GM12878 (cell line): ENCODE measurements at regions of chrX and their contacts with region 1.

Region 1: GRCh38 chrX:49291615-49292337 is 11.7 kb upstream of the GAGE10 start:
- DNase-seq: no peak
- ATAC-seq: peak; percentile 94
- H3K4me3 ChIP-seq: no peak overlapping the region
- H3K27ac ChIP-seq: no peak overlapping the region
- H3K4me1 ChIP-seq: no peaks in the 10 kb centered on the region
- H3K27me3 ChIP-seq: no peaks in the 10 kb centered on the region
- CTCF ChIP-seq: peak; percentile 51 to 75 (median 70)
- EP300 ChIP-seq: no peak
- POLR2A ChIP-seq: no peak
- RAD21 ChIP-seq: peak; percentile 53

Region 2: GRCh38 chrX:49269010-49269767 is 22.6 kb before region 1 on chrX:
- CTCF ChIA-PET with region 1: no interaction called
- POLR2A ChIA-PET with region 1: no interaction called
- RAD21 ChIA-PET with region 1: no interaction called
- SMC1A ChIA-PET with region 1: no interaction called
- in situ Hi-C with region 1: no loop called
- intact Hi-C with region 1: no loop called
- DNase-seq: peak; percentile 93
- ATAC-seq: peak; percentile 94
- H3K4me3 ChIP-seq: peak overlapping the region; percentile 73; the same call in 1 of the 2 replicates
- H3K27ac ChIP-seq: peak overlapping the region; percentile 91
- H3K4me1 ChIP-seq: peaks cover 4% of the 10 kb centered on the region; the same call in 1 of the 2 replicates
- H3K27me3 ChIP-seq: no peaks in the 10 kb centered on the region
- CTCF ChIP-seq: no peak
- EP300 ChIP-seq: no peak; a peak in 1 of 4 replicates
- POLR2A ChIP-seq: peak; percentile 87
- RAD21 ChIP-seq: no peak

Region 3: DNA sequence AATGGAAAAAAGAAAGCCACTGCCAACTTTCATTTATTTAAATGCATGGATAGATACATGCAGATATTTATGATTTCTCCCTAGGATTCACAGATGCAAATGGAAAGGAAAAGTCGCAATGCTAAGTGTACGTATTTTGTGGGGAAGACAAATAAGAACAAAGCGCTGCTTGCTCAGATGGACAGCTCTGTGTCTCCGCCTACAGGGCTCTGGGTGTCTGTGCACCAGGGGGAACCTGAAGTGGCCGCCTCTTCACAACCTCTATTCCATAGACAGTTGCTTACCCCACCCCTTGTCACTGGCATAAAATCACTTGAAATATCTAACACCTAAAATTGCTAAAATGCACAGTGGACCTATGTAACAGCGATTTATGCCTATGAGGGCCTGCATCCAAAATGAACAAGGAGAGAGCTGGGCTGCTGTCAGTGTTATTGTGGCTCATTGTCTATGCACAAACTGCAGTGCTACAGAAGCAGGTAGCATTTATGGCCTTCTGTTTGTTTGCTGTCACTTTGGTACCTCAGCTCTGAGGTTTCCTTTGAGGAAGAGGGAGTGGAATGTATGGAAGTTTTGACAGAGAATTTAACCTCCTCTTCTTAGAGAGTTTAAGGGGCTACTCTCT is 462.6 kb after region 1 on chrX:
- CTCF ChIA-PET with region 1: interaction called, 4 read pairs
- POLR2A ChIA-PET with region 1: no interaction called
- RAD21 ChIA-PET with region 1: no interaction called
- SMC1A ChIA-PET with region 1: no interaction called
- in situ Hi-C with region 1: no loop called
- intact Hi-C with region 1: loop called (anchors 2 kb)
- DNase-seq: no peak
- ATAC-seq: peak; percentile 83
- H3K4me3 ChIP-seq: no peak overlapping the region
- H3K27ac ChIP-seq: no peak overlapping the region
- H3K4me1 ChIP-seq: no peaks in the 10 kb centered on the region
- H3K27me3 ChIP-seq: no peaks in the 10 kb centered on the region
- CTCF ChIP-seq: peak; percentile 71 to 79 (median 76)
- EP300 ChIP-seq: no peak
- POLR2A ChIP-seq: no peak
- RAD21 ChIP-seq: peak; percentile 62

Region 4: GRCh38 chrX:49862093-49862492 is 570.3 kb after region 1 on chrX:
- CTCF ChIA-PET with region 1: no interaction called
- POLR2A ChIA-PET with region 1: no interaction called
- RAD21 ChIA-PET with region 1: no interaction called
- SMC1A ChIA-PET with region 1: no interaction called
- in situ Hi-C with region 1: no loop called
- intact Hi-C with region 1: no loop called
- DNase-seq: no peak
- ATAC-seq: no peak
- H3K4me3 ChIP-seq: no peak overlapping the region
- H3K27ac ChIP-seq: no peak overlapping the region
- H3K4me1 ChIP-seq: no peaks in the 10 kb centered on the region
- H3K27me3 ChIP-seq: no peaks in the 10 kb centered on the region
- CTCF ChIP-seq: no peak
- EP300 ChIP-seq: no peak
- POLR2A ChIP-seq: no peak
- RAD21 ChIP-seq: no peak